ENCODE measurements at regions of chr11 and their contacts with region 1.

Region 1: GRCh38 chr11:72648384-72649136 is 25.7 kb downstream of the PDE2A start:
- DNase-seq: no peak
- ATAC-seq: no peak
- H3K4me3 ChIP-seq: no peak overlapping the region
- H3K27ac ChIP-seq: no peak overlapping the region
- H3K4me1 ChIP-seq: no peaks in the 10 kb centered on the region
- H3K27me3 ChIP-seq: no peaks in the 10 kb centered on the region
- CTCF ChIP-seq: no peak

Region 2: DNA sequence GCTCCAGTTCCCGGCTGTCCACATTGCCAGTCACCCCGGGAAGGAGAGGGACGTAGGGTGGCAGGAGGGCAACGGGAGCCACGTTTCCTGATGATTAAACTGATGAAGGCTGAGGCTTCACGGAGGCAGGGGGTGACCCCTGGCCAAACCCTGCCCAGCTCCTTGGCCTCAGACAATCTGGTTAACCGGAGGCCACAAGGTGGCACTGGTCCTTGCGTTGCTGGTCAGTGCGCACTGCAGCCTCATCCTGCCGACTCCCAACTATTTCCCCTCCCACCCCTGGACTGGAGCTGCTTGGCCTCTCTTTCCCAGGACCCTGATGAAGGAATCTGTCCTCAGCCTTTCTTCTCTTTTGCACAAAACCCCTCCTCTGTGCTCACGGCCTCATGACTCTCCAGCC is 49.7 kb before region 1 on chr11:
- intact Hi-C with region 1: loop called in 1 of 3 experiments (anchors 5 kb)
- DNase-seq: no peak
- ATAC-seq: peak in 3 of 4 donors; percentile 66 to 76 (median 71)
- H3K4me3 ChIP-seq: no peak overlapping the region
- H3K27ac ChIP-seq: no peak overlapping the region
- H3K4me1 ChIP-seq: no peaks in the 10 kb centered on the region
- H3K27me3 ChIP-seq: no peaks in the 10 kb centered on the region
- CTCF ChIP-seq: peak in 1 of 4 donors; percentile 21